ENCODE measurements at regions of chr9 and their contacts with region 1.

Region 1: DNA sequence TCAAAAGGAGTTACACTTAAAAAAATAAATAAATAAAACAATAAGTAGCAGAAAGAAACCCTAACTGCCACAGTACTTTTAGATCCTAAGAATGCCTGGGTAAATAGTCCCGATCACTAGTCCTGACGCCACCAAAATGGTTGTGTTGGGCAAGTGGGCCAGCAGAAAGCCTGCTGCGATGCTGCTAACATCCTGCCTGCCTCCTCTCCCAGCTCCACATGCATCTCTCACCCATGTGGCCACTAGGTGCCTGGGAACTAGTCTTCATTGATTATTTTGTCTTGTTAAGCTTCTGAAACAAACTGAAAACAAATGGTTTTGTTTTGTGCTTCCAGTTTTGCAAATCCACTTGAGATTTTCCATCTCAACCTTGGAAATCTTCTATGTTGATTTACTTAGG is 54.4 kb upstream of the TRAF1 start:
- DNase-seq: no peak
- H3K4me3 Mint-ChIP-seq: no peak overlapping the region
- H3K27ac Mint-ChIP-seq: no peak overlapping the region
- H3K4me1 Mint-ChIP-seq: peaks cover under 1% of the 10 kb centered on the region
- H3K27me3 Mint-ChIP-seq: peaks cover 18% of the 10 kb centered on the region

Region 2: GRCh38 chr9:120783602-120784047 is 197.3 kb before region 1 on chr9:
- intact Hi-C with region 1: no loop called
- DNase-seq: no peak
- H3K4me3 Mint-ChIP-seq: no peak overlapping the region
- H3K27ac Mint-ChIP-seq: no peak overlapping the region
- H3K4me1 Mint-ChIP-seq: peaks cover 48% of the 10 kb centered on the region
- H3K27me3 Mint-ChIP-seq: no peaks in the 10 kb centered on the region

Region 3: DNA sequence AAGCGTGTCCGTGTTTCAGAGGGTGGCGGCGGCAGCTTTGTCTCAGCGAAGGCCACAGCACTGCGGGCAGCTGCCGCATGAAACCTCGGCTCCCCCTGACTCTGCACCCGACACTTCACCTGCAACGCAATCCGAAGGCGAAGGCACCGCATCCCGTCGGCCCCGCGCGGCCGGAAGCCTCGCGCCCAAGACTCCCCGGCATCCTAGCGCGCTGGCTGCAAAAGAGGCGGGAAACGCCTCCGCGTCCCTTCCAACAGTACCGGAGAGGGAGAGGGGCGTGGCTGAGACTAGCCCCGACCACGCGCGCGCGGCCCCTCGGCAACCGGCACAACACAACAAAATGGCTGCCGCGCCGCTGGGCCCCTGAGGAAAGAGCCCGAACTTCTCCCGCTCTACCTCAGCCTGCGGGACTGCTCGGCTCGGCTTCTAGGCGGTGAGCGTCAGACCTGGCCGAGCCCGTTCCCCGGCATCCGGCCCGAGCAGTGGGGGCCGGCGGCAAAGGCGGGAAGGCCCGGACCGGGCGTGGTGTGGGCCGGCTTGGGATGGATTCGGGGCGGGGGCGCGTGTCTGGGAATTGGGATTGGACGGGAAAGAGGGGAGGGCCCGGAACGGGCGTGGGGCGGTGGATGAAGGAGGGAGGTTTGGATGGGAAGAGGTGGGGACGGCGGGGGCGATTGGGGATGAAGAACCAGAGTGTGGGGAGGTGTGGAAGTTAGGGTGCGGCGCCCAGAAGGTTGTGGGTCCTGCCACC is 93.9 kb after region 1 on chr9 and contains the start of gene CNTRL:
- intact Hi-C with region 1: loop called (anchors 1 kb)
- DNase-seq: peak; percentile 90
- H3K4me3 Mint-ChIP-seq: peak within 1 kb of the TSS; percentile 100
- H3K27ac Mint-ChIP-seq: peak within 1 kb of the TSS; percentile 91
- H3K4me1 Mint-ChIP-seq: peaks cover 57% of the 10 kb centered on the region
- H3K27me3 Mint-ChIP-seq: no peaks in the 10 kb centered on the region
- total RNA-seq, gene CNTRL: 69.9 and 74.2 TPM in 2 replicates

Measured in activated T-helper 1 cell treated with anti-CD3 and anti-CD28 coated beads, Interleukin-12 subunit alpha, Interleukin-12 subunit beta, Interleukin-2, Interleukin-4 antibody, amounts not matched to agents 30 ng/mL and 10 ng/mL and 1 ng/mL, durations not matched to agents 14 hours and 24 hours and 36 hours (primary cell).